AG04449 (cell line): ENCODE measurements at regions of chr17 and their contacts with region 1.

Region 1: GRCh38 chr17:43927060-43927864 is 15.0 kb downstream of the PPY start:
- DNase-seq: no peak
- H3K4me3 ChIP-seq: no peak overlapping the region; the same call in 1 of the 2 replicates
- CTCF ChIP-seq: no peak

Region 2: GRCh38 chr17:43634591-43635125 is 292.6 kb before region 1 on chr17:
- CTCF ChIA-PET with region 1: no interaction called
- POLR2A ChIA-PET with region 1: no interaction called
- DNase-seq: no peak
- H3K4me3 ChIP-seq: no peak overlapping the region
- CTCF ChIP-seq: no peak

Region 3: DNA sequence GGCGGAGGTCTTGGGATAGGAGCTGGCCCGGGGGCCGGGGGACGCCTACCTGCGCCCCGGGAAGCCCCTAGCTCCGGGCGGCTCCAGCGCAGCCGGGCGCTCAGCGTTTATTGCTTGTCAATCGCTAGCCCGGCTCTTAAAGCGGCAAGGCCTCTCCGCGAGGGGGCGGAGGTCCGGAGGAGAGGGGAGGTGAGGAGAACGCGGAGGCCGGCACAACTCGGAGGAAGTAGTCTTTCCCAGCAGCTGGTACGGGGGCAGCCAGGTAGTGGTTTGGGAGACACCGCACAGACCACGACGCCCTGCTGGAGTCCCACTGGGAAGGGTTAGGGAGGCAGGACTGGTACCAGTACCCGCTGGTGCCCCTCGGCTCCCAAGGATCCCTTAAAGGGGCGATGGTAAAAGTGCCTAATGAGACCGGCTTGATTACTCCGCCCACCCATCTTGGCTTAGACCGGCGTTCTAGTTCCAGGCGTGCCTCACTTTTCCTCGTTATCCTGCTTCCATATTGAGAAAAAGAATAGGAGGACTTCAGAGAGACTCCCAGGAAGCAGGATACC is 19.8 kb before region 1 on chr17 and contains the start of gene MPP2:
- CTCF ChIA-PET with region 1: interaction called, 64 read pairs
- POLR2A ChIA-PET with region 1: interaction called, 3 read pairs
- DNase-seq: no peak
- H3K4me3 ChIP-seq: peak within 1 kb of the TSS; percentile 74
- CTCF ChIP-seq: peak; percentile 32

Region 4: DNA sequence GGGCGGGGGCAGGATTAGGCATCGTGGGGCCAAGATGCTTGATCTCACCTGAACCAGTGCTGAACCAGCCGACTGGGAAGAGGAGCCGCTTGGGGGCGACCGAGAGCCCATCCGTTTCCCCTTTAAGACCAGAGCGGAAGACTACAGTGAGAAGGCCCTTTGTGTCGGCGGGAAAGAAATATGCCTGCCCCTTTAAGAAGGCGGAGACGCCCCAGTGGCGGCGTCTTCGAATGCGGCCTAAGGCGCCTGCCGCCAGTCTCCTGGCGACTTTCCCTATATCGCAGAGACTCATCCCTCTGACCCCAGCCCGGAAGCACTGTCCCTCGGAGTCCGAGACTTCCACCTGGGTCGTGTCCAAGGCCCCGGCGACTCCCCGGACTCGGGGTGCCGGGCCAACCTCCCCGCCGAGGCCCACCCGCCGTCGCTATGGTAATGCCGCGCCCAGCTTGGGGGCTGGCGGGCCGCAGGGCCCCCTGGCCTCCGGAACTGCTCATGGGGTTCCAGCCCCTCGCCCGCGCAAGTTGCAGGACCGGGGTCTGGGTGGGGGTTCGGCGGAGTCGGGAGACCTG is 214.5 kb after region 1 on chr17 and contains the start of gene HROB:
- CTCF ChIA-PET with region 1: no interaction called
- POLR2A ChIA-PET with region 1: no interaction called
- DNase-seq: peak; percentile 87
- H3K4me3 ChIP-seq: peak within 1 kb of the TSS; percentile 77
- CTCF ChIP-seq: peak; percentile 92